ENCODE measurements at regions of chr10 and their contacts with region 1.

Region 1: GRCh38 chr10:26621889-26622711 is 75.4 kb upstream of the PDSS1 start:
- DNase-seq: peak in 4 of 9 donors; percentile 10 to 27 (median 20)
- ATAC-seq: peak; percentile 78
- H3K4me3 ChIP-seq: no peak overlapping the region
- H3K4me3 Mint-ChIP-seq: peak overlapping the region; percentile 35 to 83 (median 76)
- H3K27ac ChIP-seq: peak overlapping the region; percentile 41
- H3K27ac Mint-ChIP-seq: peak overlapping the region in 7 of 9 donors; percentile 18 to 78 (median 52)
- H3K4me1 ChIP-seq: no peaks in the 10 kb centered on the region
- H3K4me1 Mint-ChIP-seq: peaks cover 0 to 17% (median 13%) of the 10 kb centered on the region in 7 donors
- H3K27me3 ChIP-seq: peaks cover 0 to 7% of the 10 kb centered on the region in 2 donors
- H3K27me3 Mint-ChIP-seq: peaks cover 9 to 45% (median 21%) of the 10 kb centered on the region in 5 donors

Region 2: DNA sequence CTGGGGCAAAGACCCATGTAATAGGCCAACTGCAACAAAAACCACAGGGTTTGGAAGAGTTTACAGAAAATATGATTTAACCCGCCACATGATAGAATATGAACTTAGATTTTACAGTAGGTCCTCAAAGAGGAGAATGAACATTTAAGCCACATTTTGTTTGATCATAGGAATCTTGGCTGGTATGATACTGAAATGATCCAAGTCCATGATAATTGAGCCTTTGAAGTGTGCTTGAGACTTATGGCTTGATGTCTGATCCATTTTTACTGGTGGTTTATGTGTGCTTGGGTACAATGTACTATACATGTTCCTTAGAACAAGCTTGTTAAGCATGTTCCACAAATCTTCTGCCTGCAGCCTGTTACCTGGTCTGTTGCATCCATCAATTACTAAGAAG is 33.6 kb after region 1 on chr10:
- CTCF ChIA-PET with region 1: no interaction called
- POLR2A ChIA-PET with region 1: no interaction called
- intact Hi-C with region 1: loop called in 1 of 2 experiments (anchors 5 kb)
- DNase-seq: no peak
- ATAC-seq: no peak
- H3K4me3 ChIP-seq: no peak overlapping the region
- H3K4me3 Mint-ChIP-seq: no peak overlapping the region
- H3K27ac ChIP-seq: no peak overlapping the region
- H3K27ac Mint-ChIP-seq: peak overlapping the region in 1 of 9 donors; percentile 42
- H3K4me1 ChIP-seq: no peaks in the 10 kb centered on the region
- H3K4me1 Mint-ChIP-seq: no peaks in the 10 kb centered on the region
- H3K27me3 ChIP-seq: no peaks in the 10 kb centered on the region
- H3K27me3 Mint-ChIP-seq: peaks cover 0 to 15% (median 0%) of the 10 kb centered on the region in 5 donors